ENCODE measurements at regions of chr4 and their contacts with region 1.

Region 1: GRCh38 chr4:177250056-177250696 is 59.5 kb upstream of the NEIL3 start:
- DNase-seq: peak; percentile 69 to 92
- H3K4me3 ChIP-seq: no peak overlapping the region
- H3K27ac ChIP-seq: no peak overlapping the region
- H3K4me1 ChIP-seq: 0 out of 7 replicates have a peak, but pooled peaks cover 0 to 2% (median 0%) of the 10 kb centered on the region in 4 experiments
- H3K27me3 ChIP-seq: no peaks in the 10 kb centered on the region; a peak in 1 of 7 replicates
- CTCF ChIP-seq: peak; percentile 98 to 99 (median 99)
- EP300 ChIP-seq: no peak
- POLR2A ChIP-seq: no peak
- RAD21 ChIP-seq: peak; percentile 100

Region 2: DNA sequence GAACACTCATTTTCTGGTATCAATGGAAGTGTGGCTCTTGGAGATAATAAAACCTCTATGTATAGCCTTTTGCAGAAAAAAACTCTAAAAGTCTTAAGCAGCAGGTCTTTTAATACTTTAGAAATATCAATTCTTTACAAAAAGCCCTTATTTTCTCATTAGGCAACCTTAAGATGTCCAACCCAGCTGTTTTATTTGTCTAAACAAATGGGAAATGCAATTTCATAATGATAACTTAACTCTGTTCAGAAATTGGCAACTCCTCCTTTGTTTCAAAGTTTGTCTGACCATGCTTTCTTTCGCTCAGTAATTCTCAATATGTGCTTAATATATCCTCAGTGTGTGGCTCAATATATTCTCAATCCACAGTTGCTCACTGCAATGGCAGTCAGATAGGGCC is 261.0 kb before region 1 on chr4:
- CTCF ChIA-PET with region 1: no interaction called
- POLR2A ChIA-PET with region 1: no interaction called
- DNase-seq: no peak
- H3K4me3 ChIP-seq: no peak overlapping the region
- H3K27ac ChIP-seq: no peak overlapping the region
- H3K4me1 ChIP-seq: no peaks in the 10 kb centered on the region
- H3K27me3 ChIP-seq: no peaks in the 10 kb centered on the region
- CTCF ChIP-seq: no peak
- EP300 ChIP-seq: no peak
- POLR2A ChIP-seq: no peak
- RAD21 ChIP-seq: no peak

Region 3: GRCh38 chr4:177263818-177264217 is 13.6 kb after region 1 on chr4:
- CTCF ChIA-PET with region 1: interaction called, 11 read pairs
- POLR2A ChIA-PET with region 1: no interaction called
- DNase-seq: no peak
- H3K4me3 ChIP-seq: no peak overlapping the region
- H3K27ac ChIP-seq: no peak overlapping the region
- H3K4me1 ChIP-seq: peaks cover 0 to 2% (median 0%) of the 10 kb centered on the region in 4 experiments; a peak in 1 of 7 replicates
- H3K27me3 ChIP-seq: no peaks in the 10 kb centered on the region
- CTCF ChIP-seq: no peak
- EP300 ChIP-seq: no peak
- POLR2A ChIP-seq: no peak
- RAD21 ChIP-seq: no peak

Region 4: GRCh38 chr4:177275999-177276398 is 25.8 kb after region 1 on chr4:
- CTCF ChIA-PET with region 1: interaction called, 15 read pairs
- POLR2A ChIA-PET with region 1: no interaction called
- DNase-seq: no peak
- H3K4me3 ChIP-seq: no peak overlapping the region
- H3K27ac ChIP-seq: no peak overlapping the region
- H3K4me1 ChIP-seq: no peaks in the 10 kb centered on the region
- H3K27me3 ChIP-seq: no peaks in the 10 kb centered on the region
- CTCF ChIP-seq: no peak
- EP300 ChIP-seq: no peak
- POLR2A ChIP-seq: no peak
- RAD21 ChIP-seq: no peak

Region 5: DNA sequence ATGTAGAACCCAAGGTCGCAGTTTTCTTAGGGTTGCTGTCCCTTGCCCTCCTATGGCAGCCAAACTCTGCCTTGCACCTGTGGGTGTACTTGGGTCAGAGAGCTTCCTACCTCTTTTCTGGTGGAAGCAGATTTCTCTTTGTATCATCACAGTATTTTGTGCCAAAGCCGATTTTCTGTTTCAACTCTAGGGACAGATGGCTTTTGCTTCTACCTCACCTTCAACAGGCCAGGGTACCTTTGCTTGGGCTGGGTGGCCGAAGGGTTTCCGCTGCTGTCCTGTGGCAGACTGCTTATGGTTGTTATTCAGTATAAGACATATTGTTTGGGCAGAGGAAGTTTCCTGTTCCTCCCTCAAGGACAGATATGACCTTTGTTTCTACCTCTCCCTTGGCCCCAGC is 81.9 kb after region 1 on chr4:
- CTCF ChIA-PET with region 1: interaction called, 67 read pairs
- POLR2A ChIA-PET with region 1: no interaction called
- DNase-seq: no peak
- H3K4me3 ChIP-seq: no peak overlapping the region
- H3K27ac ChIP-seq: no peak overlapping the region
- H3K4me1 ChIP-seq: no peaks in the 10 kb centered on the region
- H3K27me3 ChIP-seq: no peaks in the 10 kb centered on the region
- CTCF ChIP-seq: no peak
- EP300 ChIP-seq: no peak
- POLR2A ChIP-seq: no peak
- RAD21 ChIP-seq: no peak

Region 6: GRCh38 chr4:177339477-177340374 is 89.5 kb after region 1 on chr4:
- CTCF ChIA-PET with region 1: interaction called, 67 read pairs
- POLR2A ChIA-PET with region 1: no interaction called
- DNase-seq: no peak
- H3K4me3 ChIP-seq: no peak overlapping the region
- H3K27ac ChIP-seq: no peak overlapping the region
- H3K4me1 ChIP-seq: no peaks in the 10 kb centered on the region
- H3K27me3 ChIP-seq: no peaks in the 10 kb centered on the region
- CTCF ChIP-seq: peak in 2 of 3 experiments; percentile 31 to 62; a peak in 2 of 4 replicates
- EP300 ChIP-seq: no peak
- POLR2A ChIP-seq: no peak
- RAD21 ChIP-seq: peak; percentile 64 to 65

Region 7: GRCh38 chr4:177349188-177349587 is 99.0 kb after region 1 on chr4:
- CTCF ChIA-PET with region 1: interaction called, 26 read pairs
- POLR2A ChIA-PET with region 1: no interaction called
- DNase-seq: no peak
- H3K4me3 ChIP-seq: no peak overlapping the region
- H3K27ac ChIP-seq: no peak overlapping the region
- H3K4me1 ChIP-seq: no peaks in the 10 kb centered on the region
- H3K27me3 ChIP-seq: no peaks in the 10 kb centered on the region
- CTCF ChIP-seq: peak in 2 of 3 experiments; percentile 17 to 41; a peak in 2 of 4 replicates
- EP300 ChIP-seq: no peak
- POLR2A ChIP-seq: no peak
- RAD21 ChIP-seq: 0 out of 4 replicates have a peak, but pooled peaks have one; percentile 6 to 15

Region 8: GRCh38 chr4:177380730-177381287 is 130.6 kb after region 1 on chr4:
- CTCF ChIA-PET with region 1: interaction called, 17 read pairs
- POLR2A ChIA-PET with region 1: no interaction called
- DNase-seq: peak; percentile 65 to 72
- H3K4me3 ChIP-seq: no peak overlapping the region
- H3K27ac ChIP-seq: no peak overlapping the region
- H3K4me1 ChIP-seq: no peaks in the 10 kb centered on the region; a peak in 2 of 7 replicates
- H3K27me3 ChIP-seq: no peaks in the 10 kb centered on the region
- CTCF ChIP-seq: peak; percentile 83 to 98 (median 97)
- EP300 ChIP-seq: no peak
- POLR2A ChIP-seq: no peak
- RAD21 ChIP-seq: peak; percentile 86 to 88

Region 9: GRCh38 chr4:177517862-177518261 is 267.7 kb after region 1 on chr4:
- CTCF ChIA-PET with region 1: no interaction called
- POLR2A ChIA-PET with region 1: no interaction called
- DNase-seq: no peak
- H3K4me3 ChIP-seq: no peak overlapping the region
- H3K27ac ChIP-seq: no peak overlapping the region
- H3K4me1 ChIP-seq: no peaks in the 10 kb centered on the region
- H3K27me3 ChIP-seq: no peaks in the 10 kb centered on the region
- CTCF ChIP-seq: no peak
- EP300 ChIP-seq: no peak
- POLR2A ChIP-seq: no peak
- RAD21 ChIP-seq: no peak

Region 10: GRCh38 chr4:177611974-177612664 is 361.9 kb after region 1 on chr4:
- CTCF ChIA-PET with region 1: no interaction called
- POLR2A ChIA-PET with region 1: no interaction called
- DNase-seq: no peak
- H3K4me3 ChIP-seq: no peak overlapping the region
- H3K27ac ChIP-seq: no peak overlapping the region
- H3K4me1 ChIP-seq: peaks cover 0 to 2% (median 1%) of the 10 kb centered on the region in 4 experiments; a peak in 2 of 7 replicates
- H3K27me3 ChIP-seq: no peaks in the 10 kb centered on the region
- CTCF ChIP-seq: no peak
- EP300 ChIP-seq: no peak
- POLR2A ChIP-seq: no peak
- RAD21 ChIP-seq: no peak

Measured in H1 (cell line).